Dendritic cell treated with granulocyte-macrophage colony-stimulating factor and Interleukin-4, amounts not matched to agents 40 ng/mL and 50 ng/mL, for 4 days (primary cell): ENCODE measurements at regions of chr1 and their contacts with region 1.

Region 1: DNA sequence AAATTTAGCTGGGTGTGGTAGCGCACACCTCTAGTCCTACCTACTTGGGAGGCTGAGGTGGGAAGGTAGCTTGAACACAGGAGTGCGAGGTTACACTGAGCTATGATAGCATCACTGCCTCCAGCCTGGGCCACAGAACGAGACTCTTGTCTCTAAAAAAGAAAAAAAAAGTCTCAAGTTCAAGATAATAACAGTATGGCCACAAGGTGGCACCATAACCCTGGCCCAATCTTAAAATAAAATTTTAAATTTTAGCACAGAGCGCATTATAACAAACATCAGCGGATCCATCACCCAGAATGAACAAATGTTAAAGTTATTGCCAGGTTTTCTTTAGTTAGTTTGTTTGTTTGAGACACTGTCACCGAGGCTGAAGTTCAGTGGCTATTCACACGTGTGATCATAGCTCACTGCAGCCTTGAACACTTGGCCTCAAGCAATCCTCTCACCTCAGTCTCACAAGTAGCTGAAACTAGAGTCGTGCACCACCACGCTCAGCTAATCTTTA is 2.9 kb upstream of the HTR6 start:
- H3K4me3 Mint-ChIP-seq: no peak overlapping the region
- H3K27ac Mint-ChIP-seq: no peak overlapping the region
- H3K4me1 Mint-ChIP-seq: peaks cover 6% of the 10 kb centered on the region
- H3K27me3 Mint-ChIP-seq: peaks cover 66% of the 10 kb centered on the region

Region 2: GRCh38 chr1:19704247-19705113 is 42.7 kb after region 1 on chr1:
- intact Hi-C with region 1: loop called (anchors 2 kb)
- H3K4me3 Mint-ChIP-seq: no peak overlapping the region
- H3K27ac Mint-ChIP-seq: no peak overlapping the region
- H3K4me1 Mint-ChIP-seq: no peaks in the 10 kb centered on the region
- H3K27me3 Mint-ChIP-seq: no peaks in the 10 kb centered on the region